Transverse colon (tissue), 4 donors: ENCODE measurements at regions of chr2 and their contacts with region 1.

Region 1: DNA sequence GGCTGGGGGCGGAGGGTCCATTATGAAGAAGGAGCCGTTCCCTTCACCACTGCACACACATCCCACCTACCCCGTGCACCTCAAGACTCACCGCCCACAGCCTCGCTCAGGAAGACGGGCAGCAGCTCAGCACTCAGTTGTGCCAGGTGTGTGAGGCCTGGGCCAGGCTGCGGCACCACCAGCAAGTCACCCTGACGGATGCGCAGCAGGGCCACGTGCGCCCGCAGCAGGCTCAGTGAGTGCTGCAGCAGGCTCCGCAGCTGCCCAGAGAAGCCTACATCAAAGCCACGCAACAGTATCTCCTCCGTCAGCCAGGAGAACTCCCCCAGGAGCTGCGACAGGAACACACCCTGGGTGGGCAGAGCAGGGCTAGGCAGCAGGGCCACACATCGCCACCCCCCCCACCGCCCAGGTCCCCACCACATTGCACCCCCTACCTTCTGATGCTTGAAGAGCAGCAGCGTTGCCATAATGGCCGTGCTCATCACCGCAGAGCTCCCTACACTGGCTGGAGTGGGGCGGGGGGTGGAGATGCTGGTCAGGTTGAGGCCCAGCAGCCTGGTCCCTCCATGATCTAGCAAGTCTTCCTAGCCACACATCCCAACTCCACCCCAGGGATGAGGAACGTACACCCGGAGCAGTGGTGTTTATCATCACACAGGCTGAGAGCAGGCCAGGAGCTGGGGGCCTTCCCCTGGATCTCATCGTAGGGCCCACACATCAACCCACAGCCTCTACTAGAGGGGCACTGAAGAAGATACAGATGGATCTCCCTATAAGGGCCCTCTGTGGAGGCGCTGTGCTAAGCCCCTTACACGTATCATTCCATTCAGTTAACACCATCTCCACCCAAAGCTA is 10.2 kb downstream of the GPAT2 start:
- DNase-seq: no peak
- H3K4me3 ChIP-seq: no peak overlapping the region
- H3K27ac ChIP-seq: no peak overlapping the region
- H3K4me1 ChIP-seq: no peaks in the 10 kb centered on the region
- H3K27me3 ChIP-seq: no peaks in the 10 kb centered on the region
- CTCF ChIP-seq: no peak
- EP300 ChIP-seq: no peak
- POLR2A ChIP-seq: no peak

Region 2: DNA sequence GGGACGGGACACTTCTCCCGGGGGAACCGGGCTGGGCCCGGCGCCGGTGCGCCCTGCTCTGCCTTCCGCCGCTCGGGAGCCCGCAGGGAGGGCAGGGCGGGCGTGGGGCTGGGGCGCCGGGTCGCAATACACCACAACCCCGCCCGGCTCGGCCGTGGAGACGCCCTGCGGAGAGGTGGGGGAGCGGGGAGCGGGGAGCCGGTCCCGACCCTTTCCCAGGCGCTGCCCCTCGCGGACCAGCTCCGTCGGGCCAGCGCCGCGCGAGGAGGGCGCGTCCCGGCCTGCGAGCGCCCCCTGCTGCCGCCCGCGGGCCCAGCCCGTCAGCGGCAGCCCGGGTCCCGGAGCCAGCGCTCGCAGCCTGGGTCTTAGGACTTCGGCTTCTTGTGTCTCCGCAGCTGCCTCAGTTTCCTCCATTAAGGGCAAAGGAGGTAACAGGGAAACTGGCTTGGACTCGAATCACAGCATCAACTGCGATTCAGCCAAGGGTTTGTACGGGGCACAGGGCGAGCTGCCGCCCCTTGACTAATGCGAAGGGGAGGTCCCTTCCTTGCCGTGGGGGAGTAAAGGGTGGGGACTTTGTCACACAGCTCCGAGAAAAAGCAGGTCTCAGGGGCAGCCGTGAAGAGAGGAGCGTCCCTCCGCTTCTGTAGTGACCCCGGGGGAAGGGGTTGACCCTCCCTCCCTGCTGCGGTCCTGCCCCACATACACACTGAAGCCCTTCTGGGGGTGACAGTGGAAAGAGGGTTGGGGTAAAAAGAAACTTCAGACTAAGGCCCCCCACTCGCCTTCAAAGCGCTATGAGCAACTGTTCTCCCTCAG is 92.5 kb after region 1 on chr2:
- in situ Hi-C with region 1: loop called in 3 of 4 experiments (anchors 25 kb)
- intact Hi-C with region 1: no loop called
- DNase-seq: peak; percentile 62
- H3K4me3 ChIP-seq: peak overlapping the region; percentile 38 to 67 (median 58)
- H3K27ac ChIP-seq: peak overlapping the region; percentile 56 to 78 (median 72)
- H3K4me1 ChIP-seq: peaks cover 0 to 16% (median 12%) of the 10 kb centered on the region in 4 donors
- H3K27me3 ChIP-seq: peaks cover 41% of the 10 kb centered on the region
- CTCF ChIP-seq: peak; percentile 26 to 83 (median 72)
- EP300 ChIP-seq: no peak
- POLR2A ChIP-seq: no peak

Region 3: DNA sequence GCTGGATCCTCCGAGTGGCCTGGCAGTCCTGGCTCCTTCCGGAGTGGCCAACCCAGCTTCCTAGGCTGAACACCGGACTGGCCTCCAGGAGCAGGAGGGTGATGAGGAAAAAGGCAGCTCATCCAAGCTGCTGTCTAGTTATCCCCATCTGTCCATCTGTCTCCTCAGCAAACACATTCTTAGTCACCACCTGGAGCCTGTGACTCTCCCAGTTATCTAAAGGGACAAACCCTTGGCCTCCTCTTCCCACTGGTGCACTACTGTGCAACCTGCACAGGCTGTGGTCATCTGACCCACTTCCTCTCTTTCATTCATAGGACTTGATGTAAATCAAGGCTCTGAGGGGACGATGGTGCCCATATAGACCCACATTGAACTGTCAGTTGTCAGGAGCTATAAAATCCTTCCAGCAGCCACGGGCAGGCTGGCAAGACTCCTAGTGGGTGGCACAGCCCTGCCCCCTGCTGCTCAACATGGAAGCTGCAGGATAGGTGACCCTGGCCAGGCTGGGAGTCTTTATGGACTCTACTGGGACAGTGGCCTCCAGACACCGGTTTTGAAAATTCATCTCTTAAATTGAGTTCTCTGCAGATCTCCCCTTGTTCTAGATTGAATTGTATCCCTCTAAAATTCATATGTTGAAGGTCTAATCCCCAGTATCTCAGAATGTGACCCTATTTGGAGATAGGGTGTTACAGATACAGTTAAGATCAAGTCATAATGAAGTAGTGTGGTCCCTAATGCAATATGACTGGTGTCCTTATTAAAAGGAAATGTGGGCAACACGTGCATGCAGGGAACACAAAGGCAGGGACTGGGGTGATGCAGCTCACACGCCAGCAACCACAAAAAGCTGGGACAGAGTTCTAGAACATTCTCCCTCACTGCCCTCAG is 149.9 kb after region 1 on chr2:
- in situ Hi-C with region 1: loop called in 1 of 4 experiments (anchors 25 kb)
- intact Hi-C with region 1: no loop called
- DNase-seq: peak; percentile 86
- H3K4me3 ChIP-seq: no peak overlapping the region
- H3K27ac ChIP-seq: no peak overlapping the region
- H3K4me1 ChIP-seq: no peaks in the 10 kb centered on the region
- H3K27me3 ChIP-seq: no peaks in the 10 kb centered on the region
- CTCF ChIP-seq: peak; percentile 82 to 92 (median 88)
- EP300 ChIP-seq: no peak
- POLR2A ChIP-seq: no peak

Region 4: GRCh38 chr2:96265840-96266679 is 241.5 kb after region 1 on chr2 and contains the starts of genes CIAO1 and TMEM127:
- in situ Hi-C with region 1: loop called in 1 of 4 experiments (anchors 25 kb)
- intact Hi-C with region 1: no loop called
- DNase-seq: peak; percentile 99
- H3K4me3 ChIP-seq: peak within 1 kb of the TSS; percentile 72 to 97 (median 84)
- H3K27ac ChIP-seq: peak within 1 kb of the TSS; percentile 91 to 97 (median 94)
- H3K4me1 ChIP-seq: peaks cover 31 to 52% (median 37%) of the 10 kb centered on the region in 4 donors
- H3K27me3 ChIP-seq: no peaks in the 10 kb centered on the region
- CTCF ChIP-seq: peak in 4 of 5 experiments; percentile 22 to 72 (median 52)
- EP300 ChIP-seq: no peak
- POLR2A ChIP-seq: peak; percentile 98
- total RNA-seq, gene CIAO1: 114 to 220 (median 143) TPM
- total RNA-seq, gene TMEM127: 18.5 to 131 (median 82.0) TPM

Region 5: GRCh38 chr2:96470636-96471035 is 446.1 kb after region 1 on chr2:
- in situ Hi-C with region 1: no loop called
- intact Hi-C with region 1: no loop called
- DNase-seq: peak; percentile 59
- H3K4me3 ChIP-seq: peak overlapping the region in 1 of 4 donors; percentile 25
- H3K27ac ChIP-seq: no peak overlapping the region
- H3K4me1 ChIP-seq: peaks cover 0 to 8% (median 6%) of the 10 kb centered on the region in 4 donors
- H3K27me3 ChIP-seq: peaks cover 8% of the 10 kb centered on the region
- CTCF ChIP-seq: peak; percentile 48 to 68 (median 60)
- EP300 ChIP-seq: no peak
- POLR2A ChIP-seq: no peak